CD4-positive, alpha-beta T cell (primary cell): ENCODE measurements at regions of chr11 and their contacts with region 1.

Region 1: DNA sequence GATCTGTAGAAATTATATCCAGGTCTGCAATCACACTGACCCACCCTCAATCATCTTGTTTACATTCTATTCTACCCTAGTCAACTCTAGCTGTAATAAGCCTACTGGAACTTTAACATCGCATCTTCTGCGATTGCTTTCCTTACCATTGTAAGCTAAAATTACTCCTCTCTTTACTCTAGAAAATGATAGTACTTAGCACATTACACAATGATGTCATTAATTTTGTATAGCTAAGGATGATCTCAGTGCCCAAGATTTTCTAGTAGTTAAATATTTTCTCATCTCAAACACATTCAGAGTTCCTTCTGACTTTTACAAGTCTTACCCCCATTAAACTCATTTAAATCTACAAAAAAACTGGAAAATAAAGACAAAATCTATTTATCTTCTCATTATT is 39.6 kb upstream of the CTSC start:
- DNase-seq: no peak
- ATAC-seq: no peak
- H3K4me3 ChIP-seq: no peak overlapping the region
- H3K4me3 Mint-ChIP-seq: no peak overlapping the region
- H3K27ac ChIP-seq: no peak overlapping the region
- H3K27ac Mint-ChIP-seq: no peak overlapping the region
- H3K4me1 ChIP-seq: no peaks in the 10 kb centered on the region
- H3K4me1 Mint-ChIP-seq: no peaks in the 10 kb centered on the region
- H3K27me3 ChIP-seq: no peaks in the 10 kb centered on the region
- H3K27me3 Mint-ChIP-seq: no peaks in the 10 kb centered on the region
- CTCF ChIP-seq: no peak

Region 2: GRCh38 chr11:88246696-88247095 is 130.4 kb before region 1 on chr11:
- CTCF ChIA-PET with region 1: no interaction called
- POLR2A ChIA-PET with region 1: no interaction called
- intact Hi-C with region 1: no loop called
- DNase-seq: no peak
- ATAC-seq: no peak
- H3K4me3 ChIP-seq: no peak overlapping the region
- H3K4me3 Mint-ChIP-seq: no peak overlapping the region
- H3K27ac ChIP-seq: no peak overlapping the region
- H3K27ac Mint-ChIP-seq: no peak overlapping the region
- H3K4me1 ChIP-seq: no peaks in the 10 kb centered on the region
- H3K4me1 Mint-ChIP-seq: no peaks in the 10 kb centered on the region
- H3K27me3 ChIP-seq: no peaks in the 10 kb centered on the region
- H3K27me3 Mint-ChIP-seq: no peaks in the 10 kb centered on the region
- CTCF ChIP-seq: no peak

Region 3: GRCh38 chr11:88312628-88313027 is 64.5 kb before region 1 on chr11:
- CTCF ChIA-PET with region 1: no interaction called
- POLR2A ChIA-PET with region 1: no interaction called
- intact Hi-C with region 1: loop called in 1 of 2 experiments (anchors 5 kb)
- DNase-seq: no peak
- ATAC-seq: no peak
- H3K4me3 ChIP-seq: no peak overlapping the region
- H3K4me3 Mint-ChIP-seq: no peak overlapping the region
- H3K27ac ChIP-seq: no peak overlapping the region
- H3K27ac Mint-ChIP-seq: no peak overlapping the region
- H3K4me1 ChIP-seq: no peaks in the 10 kb centered on the region
- H3K4me1 Mint-ChIP-seq: peaks cover 19% of the 10 kb centered on the region
- H3K27me3 ChIP-seq: no peaks in the 10 kb centered on the region
- H3K27me3 Mint-ChIP-seq: no peaks in the 10 kb centered on the region
- CTCF ChIP-seq: no peak

Region 4: DNA sequence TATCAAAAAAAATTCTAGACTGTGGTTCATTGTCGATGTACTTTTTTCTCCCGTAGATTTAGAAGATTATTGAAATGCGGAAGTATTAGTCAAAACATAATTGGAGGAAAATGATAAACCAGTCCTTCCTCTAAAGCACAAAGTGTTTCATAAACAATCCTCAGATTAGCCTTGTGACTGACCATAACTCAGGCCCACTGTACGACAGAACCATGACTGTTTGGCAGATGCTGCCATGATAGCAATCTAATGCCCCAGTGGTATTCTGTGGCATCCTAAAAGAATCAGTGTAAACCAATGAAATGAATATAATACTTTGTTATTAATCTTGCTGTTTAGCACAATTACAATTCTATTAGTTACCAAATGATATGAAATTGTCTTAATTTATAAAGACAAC is 87.4 kb after region 1 on chr11:
- CTCF ChIA-PET with region 1: no interaction called
- POLR2A ChIA-PET with region 1: no interaction called
- intact Hi-C with region 1: no loop called
- DNase-seq: no peak
- ATAC-seq: no peak
- H3K4me3 ChIP-seq: no peak overlapping the region
- H3K4me3 Mint-ChIP-seq: no peak overlapping the region
- H3K27ac ChIP-seq: no peak overlapping the region
- H3K27ac Mint-ChIP-seq: no peak overlapping the region
- H3K4me1 ChIP-seq: no peaks in the 10 kb centered on the region
- H3K4me1 Mint-ChIP-seq: no peaks in the 10 kb centered on the region
- H3K27me3 ChIP-seq: no peaks in the 10 kb centered on the region
- H3K27me3 Mint-ChIP-seq: no peaks in the 10 kb centered on the region
- CTCF ChIP-seq: no peak